IMR-90 (cell line): ENCODE measurements at regions of chr2 and their contacts with region 1.

Region 1: GRCh38 chr2:235605312-235606003 is 111.6 kb downstream of the AGAP1 start:
- DNase-seq: peak; percentile 94
- ATAC-seq: peak; percentile 98
- H3K4me3 ChIP-seq: no peak overlapping the region
- H3K27ac ChIP-seq: no peak overlapping the region
- H3K4me1 ChIP-seq: peaks cover 6% of the 10 kb centered on the region
- H3K27me3 ChIP-seq: no peaks in the 10 kb centered on the region
- CTCF ChIP-seq: no peak
- POLR2A ChIP-seq: no peak
- RAD21 ChIP-seq: no peak

Region 2: DNA sequence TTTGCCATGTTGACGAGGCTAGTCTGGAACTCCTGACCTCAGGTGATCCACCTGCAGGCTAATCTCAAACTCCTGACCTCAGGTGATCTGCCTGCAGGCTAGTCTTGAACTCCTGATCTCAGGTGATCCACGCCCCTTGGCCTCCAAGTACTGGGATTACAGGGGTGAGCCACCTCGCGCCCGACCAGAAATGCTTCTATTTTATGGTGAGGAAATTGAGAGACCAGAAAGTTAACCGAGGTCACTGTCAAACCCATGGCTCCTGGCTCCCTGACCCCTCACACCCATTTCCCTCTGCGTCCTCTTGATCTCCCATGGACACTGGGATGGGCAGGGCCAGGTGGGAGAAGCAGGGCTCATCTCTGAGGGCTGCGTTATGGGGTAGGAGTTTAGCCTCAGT is 98.3 kb after region 1 on chr2:
- CTCF ChIA-PET with region 1: no interaction called
- POLR2A ChIA-PET with region 1: no interaction called
- dilution Hi-C with region 1: no loop called
- in situ Hi-C with region 1: no loop called
- intact Hi-C with region 1: no loop called
- DNase-seq: no peak
- ATAC-seq: no peak
- H3K4me3 ChIP-seq: no peak overlapping the region
- H3K27ac ChIP-seq: no peak overlapping the region
- H3K4me1 ChIP-seq: peaks cover 5% of the 10 kb centered on the region
- H3K27me3 ChIP-seq: no peaks in the 10 kb centered on the region
- CTCF ChIP-seq: no peak
- POLR2A ChIP-seq: no peak
- RAD21 ChIP-seq: no peak

Region 3: DNA sequence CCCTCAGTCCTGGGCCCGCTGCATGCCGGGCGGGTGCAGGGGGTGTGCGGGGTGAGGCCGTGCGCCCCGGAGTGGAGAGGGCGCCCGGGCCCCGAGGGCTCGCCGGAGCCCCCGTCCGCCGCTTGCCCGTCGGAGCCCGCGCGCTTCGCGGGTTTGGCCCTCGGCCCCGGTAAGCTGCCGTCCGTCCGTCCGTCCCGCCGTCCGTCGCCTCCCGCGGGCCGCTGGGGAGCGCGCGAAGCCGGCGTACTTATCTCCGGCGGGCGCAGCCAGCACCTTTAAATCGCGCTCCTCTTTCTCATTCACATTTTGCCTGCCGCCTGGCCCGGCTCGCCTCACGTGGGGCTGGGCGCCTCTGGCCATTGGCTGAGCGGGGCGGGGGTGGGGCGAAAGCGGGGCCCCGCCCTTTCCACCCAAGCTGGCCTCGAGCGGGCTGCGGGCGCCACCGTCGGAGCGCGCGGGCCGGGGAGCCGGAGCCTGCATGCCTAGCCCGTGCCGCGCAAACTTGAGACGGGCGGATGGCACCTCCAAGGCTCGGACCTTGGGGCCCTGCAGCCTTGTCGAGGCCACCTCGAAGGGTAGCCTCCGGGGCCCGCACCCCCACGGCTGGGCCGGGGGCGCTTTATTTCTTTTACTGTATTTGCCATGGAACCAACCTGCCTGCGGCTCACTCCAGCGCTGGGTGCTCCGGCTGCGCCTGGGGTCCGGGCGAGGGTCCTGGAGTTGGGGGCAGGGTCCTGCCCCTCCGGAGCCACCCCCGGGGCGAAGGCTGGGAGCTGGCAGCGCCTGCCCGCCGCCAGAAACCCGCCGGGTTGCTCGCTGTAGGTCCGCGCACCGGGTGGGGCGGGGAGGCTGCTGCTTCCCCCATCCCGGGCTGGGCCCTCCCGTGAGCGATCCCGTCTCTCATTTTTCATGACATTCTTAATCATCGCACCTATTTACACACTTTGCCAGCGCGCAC is 562.9 kb after region 1 on chr2 and contains the start of gene GBX2:
- CTCF ChIA-PET with region 1: no interaction called
- POLR2A ChIA-PET with region 1: no interaction called
- dilution Hi-C with region 1: no loop called
- in situ Hi-C with region 1: loop called (anchors 25 kb)
- intact Hi-C with region 1: no loop called
- DNase-seq: peak; percentile 17
- ATAC-seq: peak; percentile 33
- H3K4me3 ChIP-seq: peak within 1 kb of the TSS; percentile 31
- H3K27ac ChIP-seq: no peak within 1 kb of the TSS
- H3K4me1 ChIP-seq: peaks cover 2% of the 10 kb centered on the region; the same call in 1 of the 2 replicates
- H3K27me3 ChIP-seq: peaks cover 99% of the 10 kb centered on the region
- CTCF ChIP-seq: no peak
- POLR2A ChIP-seq: no peak
- RAD21 ChIP-seq: no peak
- total RNA-seq, gene GBX2: not detected in 2 replicates

Region 4: GRCh38 chr2:236298924-236299475 is 693.5 kb after region 1 on chr2:
- CTCF ChIA-PET with region 1: no interaction called
- POLR2A ChIA-PET with region 1: no interaction called
- dilution Hi-C with region 1: no loop called
- in situ Hi-C with region 1: no loop called
- intact Hi-C with region 1: no loop called
- DNase-seq: no peak
- ATAC-seq: no peak
- H3K4me3 ChIP-seq: no peak overlapping the region
- H3K27ac ChIP-seq: no peak overlapping the region
- H3K4me1 ChIP-seq: no peaks in the 10 kb centered on the region
- H3K27me3 ChIP-seq: no peaks in the 10 kb centered on the region; the same call in 1 of the 2 replicates
- CTCF ChIP-seq: no peak
- POLR2A ChIP-seq: no peak
- RAD21 ChIP-seq: no peak